ENCODE measurements at regions of chr2 and their contacts with region 1.

Region 1: DNA sequence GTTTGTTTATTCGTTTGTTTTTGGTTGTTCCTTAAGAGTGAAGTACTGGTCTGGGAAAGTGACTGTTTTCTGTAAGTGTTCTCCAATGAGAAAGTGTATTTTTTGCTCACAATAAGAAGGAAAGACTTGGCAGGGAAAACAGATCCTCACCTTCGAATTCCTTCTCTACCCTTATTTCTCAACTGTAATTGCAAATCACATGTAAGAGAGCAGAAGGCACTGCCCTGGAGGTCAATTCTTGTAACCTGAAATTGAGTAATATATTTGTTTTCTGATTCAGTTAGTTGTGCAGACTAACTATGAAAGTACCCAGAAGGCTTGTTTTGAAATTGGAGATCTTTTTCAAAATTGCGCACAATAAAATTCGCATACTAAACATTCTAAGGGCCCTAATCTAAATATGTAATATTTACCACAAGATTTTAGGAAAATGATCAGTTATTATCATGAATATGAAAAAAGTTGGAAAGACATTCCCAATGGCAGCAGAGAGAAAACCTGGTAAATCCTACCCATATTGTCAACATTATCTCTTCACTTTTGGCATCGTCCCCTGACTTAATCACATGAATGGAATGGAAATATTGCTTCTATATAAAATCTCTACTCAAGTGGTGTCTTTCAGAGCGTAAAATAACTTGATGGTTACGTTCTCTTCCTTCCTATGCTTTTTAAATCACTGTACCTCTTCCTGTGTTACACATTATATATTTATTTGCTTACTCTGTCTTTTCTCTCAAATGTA is 24.1 kb downstream of the TFPI start:
- DNase-seq: no peak
- H3K4me3 ChIP-seq: no peak overlapping the region
- H3K4me3 Mint-ChIP-seq: no peak overlapping the region
- H3K27ac Mint-ChIP-seq: no peak overlapping the region
- H3K4me1 ChIP-seq: peaks cover 7% of the 10 kb centered on the region; the same call in 1 of the 2 replicates
- H3K4me1 Mint-ChIP-seq: peaks cover 12% of the 10 kb centered on the region
- H3K27me3 ChIP-seq: no peaks in the 10 kb centered on the region
- H3K27me3 Mint-ChIP-seq: no peaks in the 10 kb centered on the region
- CTCF ChIP-seq: no peak

Region 2: GRCh38 chr2:187499941-187500532 is 30.1 kb before region 1 on chr2:
- CTCF ChIA-PET with region 1: no interaction called
- POLR2A ChIA-PET with region 1: no interaction called
- intact Hi-C with region 1: loop called (anchors 2 kb)
- DNase-seq: peak; percentile 52 to 71
- H3K4me3 ChIP-seq: no peak overlapping the region
- H3K4me3 Mint-ChIP-seq: no peak overlapping the region
- H3K27ac Mint-ChIP-seq: no peak overlapping the region
- H3K4me1 ChIP-seq: peaks cover 7% of the 10 kb centered on the region; the same call in 1 of the 2 replicates
- H3K4me1 Mint-ChIP-seq: peaks cover 19% of the 10 kb centered on the region
- H3K27me3 ChIP-seq: no peaks in the 10 kb centered on the region
- H3K27me3 Mint-ChIP-seq: no peaks in the 10 kb centered on the region
- CTCF ChIP-seq: peak; percentile 80 to 91